Activated CD4-positive, alpha-beta memory T cell treated with anti-CD3 and anti-CD28 coated beads for 36 hours (primary cell): ENCODE measurements at regions of chr5 and their contacts with region 1.

Region 1: DNA sequence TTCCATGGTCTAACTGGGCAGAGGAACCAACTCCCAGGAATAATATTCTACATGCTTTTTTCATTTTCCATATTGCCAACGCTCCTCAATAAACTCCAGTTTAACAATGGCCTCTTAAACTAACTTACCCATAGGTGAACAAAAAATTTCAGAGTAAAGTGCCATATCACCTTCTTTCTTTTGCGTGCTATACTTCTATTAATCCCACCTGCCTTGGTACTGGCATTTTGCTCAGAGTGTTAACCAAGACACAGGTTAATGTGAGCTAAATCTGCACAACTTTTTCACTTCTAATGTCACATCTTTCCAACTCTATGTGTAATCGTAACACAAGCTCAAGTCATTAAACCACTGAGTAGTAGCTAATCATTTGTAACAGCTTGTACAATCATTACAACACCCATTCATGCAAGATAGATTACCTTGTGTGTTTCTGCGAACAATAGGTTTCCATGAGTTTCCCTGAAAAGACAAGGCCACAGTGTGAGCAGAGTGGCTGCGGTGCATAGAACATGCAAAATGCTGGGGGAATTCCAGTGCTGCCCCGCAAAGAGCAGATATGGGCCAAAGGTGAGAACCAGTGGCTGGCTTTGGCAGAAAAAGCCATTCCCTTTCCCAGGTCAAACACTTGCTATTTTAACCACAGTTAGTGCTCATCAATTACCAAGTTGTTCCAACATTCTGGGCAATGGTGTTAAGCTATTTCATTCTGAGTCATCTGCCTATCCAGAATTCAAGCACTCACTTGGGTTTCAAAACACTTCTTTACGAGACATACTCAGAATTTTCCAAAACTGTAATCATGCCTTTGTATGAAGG is 42.8 kb downstream of the TIMD4 start:
- DNase-seq: peak; percentile 86
- H3K4me3 Mint-ChIP-seq: peak overlapping the region; percentile 48
- H3K27ac Mint-ChIP-seq: peak overlapping the region; percentile 85
- H3K4me1 Mint-ChIP-seq: peaks cover 43% of the 10 kb centered on the region
- H3K27me3 Mint-ChIP-seq: no peaks in the 10 kb centered on the region

Region 2: GRCh38 chr5:156402387-156402921 is 517.8 kb before region 1 on chr5:
- CTCF ChIA-PET with region 1: no interaction called
- POLR2A ChIA-PET with region 1: interaction called, 5 read pairs
- intact Hi-C with region 1: loop called (anchors 1 kb)
- DNase-seq: peak; percentile 84
- H3K4me3 Mint-ChIP-seq: peak overlapping the region; percentile 13
- H3K27ac Mint-ChIP-seq: peak overlapping the region; percentile 21
- H3K4me1 Mint-ChIP-seq: peaks cover 16% of the 10 kb centered on the region
- H3K27me3 Mint-ChIP-seq: peaks cover 6% of the 10 kb centered on the region

Region 3: GRCh38 chr5:156942064-156942463 is 21.8 kb after region 1 on chr5:
- CTCF ChIA-PET with region 1: interaction called, 3 read pairs
- POLR2A ChIA-PET with region 1: no interaction called
- intact Hi-C with region 1: loop called (anchors 1 kb)
- DNase-seq: no peak
- H3K4me3 Mint-ChIP-seq: no peak overlapping the region
- H3K27ac Mint-ChIP-seq: peak overlapping the region; percentile 52
- H3K4me1 Mint-ChIP-seq: peaks cover 16% of the 10 kb centered on the region
- H3K27me3 Mint-ChIP-seq: no peaks in the 10 kb centered on the region

Region 4: DNA sequence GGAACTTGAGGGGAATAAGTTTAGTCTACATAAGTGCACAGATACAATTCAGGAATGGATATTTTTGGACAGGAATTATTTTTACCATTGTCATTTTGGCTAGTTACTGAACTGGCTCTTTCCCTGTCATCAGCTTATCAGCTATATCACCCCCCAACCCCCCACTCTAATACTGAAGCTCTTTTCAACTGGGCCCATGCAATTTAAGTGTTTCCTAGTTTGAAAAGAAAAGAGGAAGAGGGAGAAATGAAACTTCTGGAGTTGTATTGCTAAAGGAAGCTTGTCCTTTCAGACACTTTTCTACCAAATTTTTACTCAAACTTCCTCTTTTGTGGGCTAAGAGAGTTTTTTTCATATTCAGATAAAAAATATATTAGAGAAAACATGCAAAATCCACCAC is 61.2 kb after region 1 on chr5:
- CTCF ChIA-PET with region 1: no interaction called
- POLR2A ChIA-PET with region 1: no interaction called
- intact Hi-C with region 1: no loop called
- DNase-seq: no peak
- H3K4me3 Mint-ChIP-seq: no peak overlapping the region
- H3K27ac Mint-ChIP-seq: no peak overlapping the region
- H3K4me1 Mint-ChIP-seq: no peaks in the 10 kb centered on the region
- H3K27me3 Mint-ChIP-seq: peaks cover 2% of the 10 kb centered on the region

Region 5: DNA sequence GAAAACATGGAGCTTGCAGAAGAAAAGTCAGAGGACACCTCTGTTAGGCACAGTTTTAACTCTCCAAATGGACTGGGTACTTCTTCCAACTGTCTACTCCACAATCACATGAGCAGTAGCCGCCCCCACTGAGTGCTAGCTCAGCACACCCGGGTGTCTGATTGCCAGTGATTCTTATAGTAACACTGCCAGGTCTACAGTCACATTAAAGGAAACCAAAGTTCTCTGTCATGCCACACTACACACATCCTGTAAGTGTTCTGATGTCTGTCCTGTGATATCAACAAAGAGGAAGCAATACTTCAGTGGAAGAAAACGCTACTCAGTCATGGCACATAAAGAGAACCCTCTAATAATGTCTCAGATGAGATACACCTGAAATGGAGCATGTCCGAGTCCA is 188.7 kb after region 1 on chr5 and contains the start of gene HAVCR2:
- CTCF ChIA-PET with region 1: no interaction called
- POLR2A ChIA-PET with region 1: interaction called, 7 read pairs
- intact Hi-C with region 1: loop called (anchors 1 kb)
- DNase-seq: peak; percentile 84
- H3K4me3 Mint-ChIP-seq: peak within 1 kb of the TSS; percentile 79
- H3K27ac Mint-ChIP-seq: peak within 1 kb of the TSS; percentile 95
- H3K4me1 Mint-ChIP-seq: peaks cover 40% of the 10 kb centered on the region
- H3K27me3 Mint-ChIP-seq: no peaks in the 10 kb centered on the region
- total RNA-seq, gene HAVCR2: 23.2 to 24.3 TPM

Region 6: GRCh38 chr5:157219491-157220271 is 299.4 kb after region 1 on chr5:
- CTCF ChIA-PET with region 1: no interaction called
- POLR2A ChIA-PET with region 1: no interaction called
- intact Hi-C with region 1: loop called (anchors 5 kb)
- DNase-seq: peak; percentile 58
- H3K4me3 Mint-ChIP-seq: peak overlapping the region; percentile 58
- H3K27ac Mint-ChIP-seq: peak overlapping the region; percentile 98
- H3K4me1 Mint-ChIP-seq: peaks cover 86% of the 10 kb centered on the region
- H3K27me3 Mint-ChIP-seq: no peaks in the 10 kb centered on the region

Region 7: DNA sequence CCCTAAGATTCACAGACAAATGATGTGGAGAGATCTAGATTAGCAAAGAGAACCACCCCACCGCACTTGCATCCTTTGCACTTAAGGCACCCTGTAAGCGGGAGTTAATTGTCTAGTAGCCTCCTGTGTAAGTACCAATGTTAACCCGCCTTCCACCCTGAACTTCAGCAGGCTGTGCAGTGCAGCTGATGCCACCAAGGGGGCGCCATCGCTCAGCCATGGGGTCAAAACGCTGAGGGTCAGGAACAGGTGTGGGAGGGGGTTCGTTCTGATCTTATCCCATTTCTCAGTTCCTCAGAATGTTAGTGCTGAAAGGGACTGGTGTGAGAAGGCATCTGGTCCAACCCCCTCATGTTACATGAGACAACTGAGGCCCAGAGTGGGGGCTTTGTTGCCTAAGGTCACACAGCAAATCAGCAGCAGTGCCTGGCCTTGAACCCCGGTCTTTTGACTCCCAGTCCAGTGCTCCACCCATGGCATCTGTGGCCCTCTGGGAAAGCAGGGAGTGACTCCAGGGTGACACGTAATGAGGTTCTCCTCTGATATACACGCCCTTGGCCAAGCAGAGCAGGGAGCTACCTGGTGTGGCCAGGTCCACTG is 403.0 kb after region 1 on chr5:
- CTCF ChIA-PET with region 1: no interaction called
- POLR2A ChIA-PET with region 1: no interaction called
- intact Hi-C with region 1: no loop called
- DNase-seq: no peak
- H3K4me3 Mint-ChIP-seq: no peak overlapping the region
- H3K27ac Mint-ChIP-seq: no peak overlapping the region
- H3K4me1 Mint-ChIP-seq: peaks cover 8% of the 10 kb centered on the region
- H3K27me3 Mint-ChIP-seq: no peaks in the 10 kb centered on the region

Region 8: GRCh38 chr5:157464519-157465171 is 544.4 kb after region 1 on chr5:
- CTCF ChIA-PET with region 1: no interaction called
- POLR2A ChIA-PET with region 1: no interaction called
- intact Hi-C with region 1: loop called (anchors 10 kb)
- DNase-seq: peak; percentile 86
- H3K4me3 Mint-ChIP-seq: peak overlapping the region; percentile 2
- H3K27ac Mint-ChIP-seq: peak overlapping the region; percentile 90
- H3K4me1 Mint-ChIP-seq: peaks cover 34% of the 10 kb centered on the region
- H3K27me3 Mint-ChIP-seq: peaks cover 15% of the 10 kb centered on the region